OCI-LY7 (cell line): ENCODE measurements at regions of chr16 and their contacts with region 1.

Region 1: DNA sequence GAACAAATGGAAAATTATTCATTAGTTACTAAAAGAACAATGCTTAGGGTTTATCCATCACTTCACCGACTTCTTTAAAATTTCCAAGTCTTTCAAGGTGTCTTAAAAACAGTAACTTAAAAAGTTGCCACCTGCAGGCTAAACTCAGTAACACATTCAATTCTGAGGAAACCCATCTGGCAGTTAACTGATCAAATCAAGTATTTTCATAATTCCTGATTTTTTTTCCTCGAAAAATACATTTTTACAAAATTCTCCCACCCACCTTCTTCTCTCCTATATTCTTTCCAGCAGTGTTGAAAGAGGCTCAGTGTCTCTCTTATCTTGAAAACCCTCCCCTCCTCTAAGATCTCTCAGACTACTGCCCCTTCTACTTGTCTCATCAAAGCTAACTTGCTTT is 29.9 kb downstream of the PARN start:
- DNase-seq: peak; percentile 47
- H3K4me3 ChIP-seq: no peak overlapping the region
- H3K27ac ChIP-seq: peak overlapping the region; percentile 19
- H3K4me1 ChIP-seq: peaks cover 17% of the 10 kb centered on the region
- CTCF ChIP-seq: peak; percentile 79

Region 2: GRCh38 chr16:14529010-14529669 is 71.0 kb before region 1 on chr16:
- CTCF ChIA-PET with region 1: no interaction called
- POLR2A ChIA-PET with region 1: no interaction called
- intact Hi-C with region 1: loop called (anchors 10 kb)
- DNase-seq: peak; percentile 78
- H3K4me3 ChIP-seq: no peak overlapping the region
- H3K27ac ChIP-seq: no peak overlapping the region
- H3K4me1 ChIP-seq: peaks cover 22% of the 10 kb centered on the region
- CTCF ChIP-seq: peak; percentile 93

Region 3: DNA sequence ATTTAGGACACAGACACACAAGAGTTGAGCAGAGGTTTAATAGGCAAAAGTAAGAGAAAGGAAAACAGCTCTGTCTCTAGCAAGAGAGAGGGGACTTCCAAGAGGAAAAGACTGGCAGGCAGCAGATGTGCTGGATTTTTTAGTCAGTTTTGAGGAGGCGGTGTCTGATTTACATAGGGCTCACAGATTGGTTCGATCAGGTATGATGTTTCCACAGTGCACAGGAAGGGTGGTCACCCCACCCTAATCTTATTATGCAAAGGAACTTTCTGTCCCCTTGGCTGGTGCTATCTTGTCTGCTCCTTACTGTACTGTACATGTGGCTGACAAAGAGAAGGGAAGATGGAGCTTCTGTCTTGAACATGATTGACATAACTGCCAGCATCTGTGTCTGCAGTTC is 57.9 kb after region 1 on chr16:
- CTCF ChIA-PET with region 1: no interaction called
- POLR2A ChIA-PET with region 1: no interaction called
- intact Hi-C with region 1: no loop called
- DNase-seq: peak; percentile 63
- H3K4me3 ChIP-seq: no peak overlapping the region
- H3K27ac ChIP-seq: peak overlapping the region; percentile 62
- H3K4me1 ChIP-seq: peaks cover 12% of the 10 kb centered on the region
- CTCF ChIP-seq: no peak